Activated naive CD4-positive, alpha-beta T cell treated with anti-CD3 and anti-CD28 coated beads for 36 hours (primary cell): ENCODE measurements at regions of chr12 and their contacts with region 1.

Region 1: DNA sequence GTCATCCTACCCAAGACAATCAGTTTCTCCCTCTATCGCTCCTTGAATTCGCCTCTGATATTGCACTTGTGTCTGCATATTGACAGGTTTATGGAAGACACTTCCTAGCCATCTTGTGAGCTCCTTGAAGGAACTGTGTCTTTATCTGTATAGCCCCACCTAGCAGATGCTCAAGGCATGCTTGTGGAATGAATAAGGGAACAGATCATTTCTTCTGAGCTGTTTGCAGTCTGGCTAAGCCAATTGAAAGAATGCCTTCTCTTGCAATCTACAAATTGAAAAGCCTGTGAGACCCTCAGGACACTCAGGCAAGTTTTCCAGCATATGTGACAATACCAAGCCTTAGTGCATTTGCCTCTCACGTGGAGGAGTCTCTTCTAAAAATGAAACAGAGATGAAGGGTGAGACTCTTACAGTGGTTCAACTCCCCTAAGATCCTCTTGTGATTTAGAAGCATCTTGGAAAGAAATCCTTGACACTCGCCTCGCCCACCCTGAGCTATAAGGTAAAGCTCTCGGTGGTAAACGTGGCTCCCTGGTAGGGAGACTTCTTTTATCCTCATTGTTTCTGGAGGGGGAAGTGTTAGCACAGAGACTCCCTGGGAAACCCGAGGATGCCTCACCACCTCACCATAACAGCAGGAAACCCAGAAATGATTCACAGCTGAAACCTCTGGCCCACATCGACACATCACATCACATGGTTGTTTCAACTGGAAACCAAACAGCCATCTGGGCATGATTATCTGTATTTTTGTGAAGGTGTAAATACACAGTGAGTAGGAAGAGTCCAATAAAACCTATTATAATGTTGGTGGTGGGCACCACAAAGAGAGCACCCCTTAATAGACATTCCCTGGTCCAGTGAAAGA is 112.3 kb upstream of the BCL2L14 start:
- DNase-seq: peak; percentile 84
- H3K4me3 Mint-ChIP-seq: peak overlapping the region; percentile 32
- H3K27ac Mint-ChIP-seq: peak overlapping the region; percentile 73
- H3K4me1 Mint-ChIP-seq: peaks cover 32% of the 10 kb centered on the region
- H3K27me3 Mint-ChIP-seq: peaks cover 11% of the 10 kb centered on the region

Region 2: GRCh38 chr12:12017798-12018197 is 59.3 kb after region 1 on chr12:
- CTCF ChIA-PET with region 1: no interaction called
- intact Hi-C with region 1: loop called (anchors 1 kb)
- DNase-seq: no peak
- H3K4me3 Mint-ChIP-seq: no peak overlapping the region
- H3K27ac Mint-ChIP-seq: peak overlapping the region; percentile 95
- H3K4me1 Mint-ChIP-seq: peaks cover 66% of the 10 kb centered on the region
- H3K27me3 Mint-ChIP-seq: no peaks in the 10 kb centered on the region